Stomach (tissue), 19 donors: ENCODE measurements at regions of chr15 and their contacts with region 1.

Region 1: DNA sequence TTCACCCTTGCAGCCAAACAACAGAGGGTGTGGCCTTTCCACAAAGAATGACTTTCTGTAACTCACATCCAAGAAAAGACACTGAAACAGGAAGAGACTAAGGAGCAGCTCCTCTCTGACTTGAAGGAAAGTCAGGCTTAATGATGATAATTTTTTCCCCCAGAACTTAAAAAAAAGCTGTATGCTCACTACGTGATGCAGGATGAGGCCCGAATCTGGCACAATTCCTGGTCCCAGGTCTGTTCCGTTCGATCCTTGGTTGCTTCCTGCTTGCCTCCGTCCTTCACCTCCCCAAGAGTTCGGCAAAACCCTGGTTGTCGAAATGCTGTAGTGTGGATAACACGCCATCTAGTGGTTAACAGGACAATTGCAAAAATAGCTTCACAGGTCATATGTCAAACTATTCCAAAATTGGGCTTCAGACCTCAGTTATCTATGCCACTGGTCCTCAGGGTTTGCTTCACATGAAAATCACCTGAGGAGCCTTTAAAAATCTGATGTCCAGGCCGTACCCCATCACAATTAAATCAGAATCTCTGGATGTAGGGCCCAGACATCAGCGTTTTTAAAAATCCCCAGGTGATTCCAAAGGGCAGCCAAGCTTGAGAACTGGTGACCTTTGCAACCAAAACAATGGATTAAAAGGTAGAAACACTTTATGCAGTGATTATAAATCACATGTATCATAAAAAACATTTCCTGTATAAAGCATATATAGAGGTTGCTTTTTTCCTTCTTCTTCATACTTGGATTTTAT is 28.1 kb upstream of the SYNM start:
- DNase-seq: peak; percentile 49 to 91
- H3K4me3 ChIP-seq: peak overlapping the region; percentile 27 to 41 (median 30)
- H3K27ac ChIP-seq: peak overlapping the region in 3 of 5 donors; percentile 18 to 64 (median 32)
- H3K4me1 ChIP-seq: peaks cover 0 to 4% (median 0%) of the 10 kb centered on the region in 4 donors
- H3K27me3 ChIP-seq: no peaks in the 10 kb centered on the region
- CTCF ChIP-seq: peak in 5 of 7 experiments; percentile 72 to 92 (median 87)
- EP300 ChIP-seq: no peak
- POLR2A ChIP-seq: no peak

Region 2: DNA sequence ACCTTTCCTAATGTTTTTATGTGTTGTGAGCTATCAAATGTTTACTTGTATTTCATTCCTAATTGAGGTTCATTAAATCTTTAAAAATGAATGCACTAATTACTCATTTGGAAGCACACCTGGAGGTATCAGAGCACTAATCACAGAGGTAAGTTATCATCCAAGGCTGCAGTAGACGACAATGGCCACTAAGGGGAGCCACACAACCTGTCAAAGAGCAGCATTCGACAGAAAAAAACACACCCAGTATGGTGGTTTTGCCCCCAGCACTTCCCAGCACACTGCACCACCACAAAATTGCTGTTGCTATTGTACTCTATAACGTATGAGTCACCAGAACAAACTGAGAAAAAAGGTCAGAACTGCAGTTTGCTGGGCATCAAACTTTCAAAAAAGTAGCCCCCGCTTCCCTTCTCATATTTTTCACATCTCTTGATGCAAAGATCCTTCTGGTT is 634.3 kb before region 1 on chr15:
- intact Hi-C with region 1: loop called (anchors 10 kb)
- DNase-seq: peak; percentile 60 to 83
- H3K4me3 ChIP-seq: no peak overlapping the region
- H3K27ac ChIP-seq: no peak overlapping the region
- H3K4me1 ChIP-seq: peaks cover 0 to 5% (median 2%) of the 10 kb centered on the region in 4 donors
- H3K27me3 ChIP-seq: peaks cover 0 to 30% (median 0%) of the 10 kb centered on the region in 3 donors
- CTCF ChIP-seq: peak in 5 of 7 experiments; percentile 53 to 80 (median 72)
- EP300 ChIP-seq: no peak
- POLR2A ChIP-seq: no peak

Region 3: GRCh38 chr15:99135194-99135593 is 58.5 kb after region 1 on chr15:
- intact Hi-C with region 1: no loop called
- DNase-seq: peak in 1 of 2 donors; percentile 40
- H3K4me3 ChIP-seq: no peak overlapping the region
- H3K27ac ChIP-seq: peak overlapping the region in 3 of 5 donors; percentile 36 to 96 (median 41)
- H3K4me1 ChIP-seq: peaks cover 0 to 53% (median 26%) of the 10 kb centered on the region in 4 donors
- H3K27me3 ChIP-seq: no peaks in the 10 kb centered on the region
- CTCF ChIP-seq: no peak
- EP300 ChIP-seq: no peak
- POLR2A ChIP-seq: no peak